ENCODE measurements at regions of chr5 and their contacts with region 1.

Region 1: DNA sequence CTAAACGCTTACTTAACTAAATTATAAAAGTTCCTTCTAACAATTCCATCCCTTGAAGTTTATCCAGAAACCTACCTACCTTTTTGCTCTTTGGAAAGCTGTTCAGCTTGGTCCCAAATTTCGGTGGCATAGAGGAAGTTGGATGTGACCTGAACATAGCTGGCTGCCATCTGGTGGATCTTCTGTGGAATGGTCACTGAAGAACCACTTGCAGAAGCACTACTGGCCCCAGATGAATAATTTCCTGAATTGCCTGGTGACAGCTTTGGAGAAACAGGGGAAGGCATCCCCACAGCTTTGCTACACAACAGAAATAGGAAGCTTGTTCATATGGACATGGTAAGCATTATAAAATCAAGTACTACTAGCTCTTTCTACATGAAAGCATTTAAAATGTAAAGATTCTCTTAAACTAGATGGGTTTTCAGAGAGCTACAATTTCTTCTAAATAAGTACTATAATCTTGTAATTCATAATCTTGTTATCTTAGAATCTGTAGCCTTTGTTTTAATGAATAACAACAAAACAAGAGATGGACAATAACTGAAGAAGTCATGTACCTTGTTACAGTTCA is 9.9 kb downstream of the LEAP2 start:
- DNase-seq: peak; percentile 70 to 74
- H3K4me3 ChIP-seq: no peak overlapping the region
- H3K4me3 Mint-ChIP-seq: no peak overlapping the region
- H3K27ac Mint-ChIP-seq: no peak overlapping the region
- H3K4me1 ChIP-seq: no peaks in the 10 kb centered on the region
- H3K4me1 Mint-ChIP-seq: peaks cover 14% of the 10 kb centered on the region
- H3K27me3 ChIP-seq: no peaks in the 10 kb centered on the region
- H3K27me3 Mint-ChIP-seq: no peaks in the 10 kb centered on the region
- CTCF ChIP-seq: peak; percentile 31 to 81

Region 2: DNA sequence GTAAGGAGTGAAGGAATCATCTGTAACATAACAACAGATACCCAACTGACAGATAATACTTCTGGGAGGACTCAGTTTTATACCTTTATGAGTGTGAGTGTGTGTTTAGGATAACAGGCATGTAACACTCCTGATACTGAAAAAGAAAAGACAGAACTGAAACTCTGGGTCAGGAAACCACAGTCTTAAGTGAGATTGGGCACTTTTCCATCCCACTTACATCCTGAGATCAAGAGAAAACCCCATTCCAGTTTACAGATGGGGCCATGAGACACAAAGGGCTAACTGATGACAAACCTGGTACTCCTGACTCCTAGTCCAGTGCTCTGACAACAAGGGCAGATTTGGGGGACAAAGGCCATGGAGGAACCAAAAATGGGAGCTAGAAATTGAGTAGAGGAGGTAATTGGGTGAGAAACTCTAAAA is 358.0 kb before region 1 on chr5:
- CTCF ChIA-PET with region 1: no interaction called
- POLR2A ChIA-PET with region 1: no interaction called
- intact Hi-C with region 1: no loop called
- DNase-seq: no peak
- H3K4me3 ChIP-seq: no peak overlapping the region
- H3K4me3 Mint-ChIP-seq: no peak overlapping the region
- H3K27ac Mint-ChIP-seq: no peak overlapping the region
- H3K4me1 ChIP-seq: no peaks in the 10 kb centered on the region
- H3K4me1 Mint-ChIP-seq: no peaks in the 10 kb centered on the region
- H3K27me3 ChIP-seq: no peaks in the 10 kb centered on the region
- H3K27me3 Mint-ChIP-seq: no peaks in the 10 kb centered on the region
- CTCF ChIP-seq: no peak

Region 3: DNA sequence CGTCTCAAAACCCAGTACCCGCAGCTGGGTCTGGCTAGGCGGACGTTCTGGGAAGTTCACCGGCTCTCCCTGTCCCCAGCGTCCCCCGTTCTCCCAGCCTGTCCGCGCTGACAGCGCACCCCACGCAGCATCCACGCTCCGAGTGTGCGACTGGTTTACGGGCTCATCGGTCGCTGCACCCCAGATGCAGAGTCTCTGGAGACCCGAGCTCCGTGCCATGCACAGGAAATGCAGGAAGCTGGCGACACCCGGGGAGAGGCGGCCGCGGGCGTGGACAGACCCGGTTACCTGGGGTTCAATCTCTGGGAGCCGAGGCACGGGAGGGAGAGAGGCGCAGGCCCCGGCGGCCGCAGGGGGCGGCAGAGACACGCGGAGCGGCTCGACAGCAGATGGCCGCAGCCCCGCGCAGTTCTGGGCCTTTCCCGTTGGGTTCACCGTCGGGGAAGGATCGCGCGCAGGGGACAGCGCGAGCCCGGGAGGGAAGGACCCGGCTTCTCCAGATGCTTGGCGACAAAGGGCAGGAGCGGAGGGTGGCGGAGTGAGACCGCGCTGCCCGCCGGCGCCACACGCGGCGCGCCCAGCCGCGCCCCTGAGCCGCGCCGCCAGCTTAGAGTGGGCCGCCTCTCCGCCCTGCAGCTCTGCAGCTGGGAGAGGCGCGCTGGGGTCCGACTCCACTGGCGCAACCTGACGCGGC is 53.5 kb before region 1 on chr5:
- CTCF ChIA-PET with region 1: interaction called, 16 read pairs
- POLR2A ChIA-PET with region 1: interaction called, 6 read pairs
- intact Hi-C with region 1: loop called (anchors 1 kb)
- DNase-seq: peak; percentile 78 to 88
- H3K4me3 ChIP-seq: peak overlapping the region; percentile 76
- H3K4me3 Mint-ChIP-seq: peak overlapping the region; percentile 88
- H3K27ac Mint-ChIP-seq: peak overlapping the region; percentile 73
- H3K4me1 ChIP-seq: peaks cover 10% of the 10 kb centered on the region
- H3K4me1 Mint-ChIP-seq: no peaks in the 10 kb centered on the region
- H3K27me3 ChIP-seq: no peaks in the 10 kb centered on the region
- H3K27me3 Mint-ChIP-seq: no peaks in the 10 kb centered on the region
- CTCF ChIP-seq: peak; percentile 89 to 96

Region 4: DNA sequence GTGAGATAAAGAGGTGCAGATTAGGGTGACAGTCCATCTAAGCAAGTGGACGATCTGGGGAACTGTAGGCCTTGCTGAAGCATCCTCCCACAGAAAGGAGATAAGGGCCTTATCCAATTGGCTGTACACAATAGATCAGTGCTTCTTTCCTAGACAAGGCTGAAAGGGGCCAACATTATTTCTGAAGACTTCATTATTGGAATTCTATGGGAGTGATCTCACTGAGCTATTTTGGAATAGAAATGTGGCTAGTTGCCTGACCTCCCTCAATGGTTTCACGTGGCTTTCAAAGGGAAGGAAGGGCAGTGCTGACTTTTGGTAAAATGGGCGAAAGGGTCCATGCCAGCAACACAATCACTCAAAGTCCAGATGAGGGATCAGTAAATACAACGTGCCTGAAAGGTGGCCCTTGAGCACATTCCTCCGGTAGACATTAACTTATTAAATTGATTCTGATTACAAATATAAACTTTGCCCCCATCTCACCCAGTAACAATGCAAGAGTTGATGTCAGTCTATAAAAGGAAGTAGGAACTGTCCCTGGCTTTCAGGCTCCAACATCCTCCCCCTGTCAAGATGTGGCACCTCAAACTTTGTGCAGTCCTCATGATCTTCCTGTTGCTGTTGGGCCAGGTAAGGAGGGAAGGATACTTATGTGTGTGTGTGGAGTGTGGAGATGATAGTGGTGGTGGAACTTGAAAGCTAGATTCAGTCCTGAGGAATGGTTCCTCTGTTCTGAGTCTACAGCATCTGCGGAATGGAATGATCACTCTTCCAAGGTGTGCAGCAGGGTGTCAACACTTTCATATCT is 10.0 kb before region 1 on chr5 and contains the start of gene LEAP2:
- CTCF ChIA-PET with region 1: no interaction called
- POLR2A ChIA-PET with region 1: no interaction called
- intact Hi-C with region 1: loop called (anchors 1 kb)
- DNase-seq: peak; percentile 60 to 70
- H3K4me3 ChIP-seq: no peak within 1 kb of the TSS
- H3K4me3 Mint-ChIP-seq: peak within 1 kb of the TSS; percentile 47
- H3K27ac Mint-ChIP-seq: peak within 1 kb of the TSS; percentile 45
- H3K4me1 ChIP-seq: peaks cover 43% of the 10 kb centered on the region
- H3K4me1 Mint-ChIP-seq: peaks cover 26% of the 10 kb centered on the region
- H3K27me3 ChIP-seq: no peaks in the 10 kb centered on the region
- H3K27me3 Mint-ChIP-seq: no peaks in the 10 kb centered on the region
- CTCF ChIP-seq: no peak
- total RNA-seq, gene LEAP2: 1.1 and 4.1 TPM in 2 replicates